Activated naive CD4-positive, alpha-beta T cell treated with anti-CD3 and anti-CD28 coated beads for 36 hours (primary cell): ENCODE measurements at regions of chr9 and their contacts with region 1.

Region 1: DNA sequence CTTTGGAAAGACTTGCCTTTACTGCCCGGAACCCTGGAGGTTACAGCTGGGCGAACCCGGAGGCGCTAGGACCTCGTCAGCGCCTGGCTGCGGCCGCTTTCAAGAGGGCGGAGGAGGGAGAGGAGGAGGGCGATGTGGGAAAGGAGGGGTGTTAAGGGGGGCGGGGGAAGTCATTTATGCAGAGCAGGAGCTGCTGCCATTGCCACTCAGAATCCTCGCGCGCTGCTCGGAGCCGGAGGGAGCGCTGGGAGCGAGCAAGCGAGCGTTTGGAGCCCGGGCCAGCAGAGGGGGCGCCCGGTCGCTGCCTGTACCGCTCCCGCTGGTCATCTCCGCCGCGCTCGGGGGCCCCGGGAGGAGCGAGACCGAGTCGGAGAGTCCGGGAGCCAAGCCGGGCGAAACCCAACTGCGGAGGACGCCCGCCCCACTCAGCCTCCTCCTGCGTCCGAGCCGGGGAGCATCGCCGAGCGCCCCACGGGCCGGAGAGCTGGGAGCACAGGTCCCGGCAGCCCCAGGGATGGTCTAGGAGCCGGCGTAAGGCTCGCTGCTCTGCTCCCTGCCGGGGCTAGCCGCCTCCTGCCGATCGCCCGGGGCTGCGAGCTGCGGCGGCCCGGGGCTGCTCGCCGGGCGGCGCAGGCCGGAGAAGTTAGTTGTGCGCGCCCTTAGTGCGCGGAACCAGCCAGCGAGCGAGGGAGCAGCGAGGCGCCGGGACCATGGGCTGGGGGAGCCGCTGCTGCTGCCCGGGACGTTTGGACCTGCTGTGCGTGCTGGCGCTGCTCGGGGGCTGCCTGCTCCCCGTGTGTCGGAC is at the start of gene PCSK5:
- DNase-seq: peak; percentile 92
- H3K4me3 Mint-ChIP-seq: peak within 1 kb of the TSS; percentile 97
- H3K27ac Mint-ChIP-seq: peak within 1 kb of the TSS; percentile 66
- H3K4me1 Mint-ChIP-seq: peaks cover 33% of the 10 kb centered on the region
- H3K27me3 Mint-ChIP-seq: no peaks in the 10 kb centered on the region
- total RNA-seq, gene PCSK5: 5.7 to 6.0 TPM

Region 2: GRCh38 chr9:75088260-75088905 is 802.3 kb before region 1 on chr9 and contains the start of gene OSTF1:
- CTCF ChIA-PET with region 1: no interaction called
- intact Hi-C with region 1: loop called (anchors 5 kb)
- DNase-seq: peak; percentile 93
- H3K4me3 Mint-ChIP-seq: peak within 1 kb of the TSS; percentile 95
- H3K27ac Mint-ChIP-seq: peak within 1 kb of the TSS; percentile 94
- H3K4me1 Mint-ChIP-seq: peaks cover 61% of the 10 kb centered on the region
- H3K27me3 Mint-ChIP-seq: no peaks in the 10 kb centered on the region
- total RNA-seq, gene OSTF1: 102 to 104 TPM

Region 3: GRCh38 chr9:75880618-75881017 is 10.1 kb before region 1 on chr9:
- CTCF ChIA-PET with region 1: no interaction called
- intact Hi-C with region 1: no loop called
- DNase-seq: no peak
- H3K4me3 Mint-ChIP-seq: no peak overlapping the region
- H3K27ac Mint-ChIP-seq: no peak overlapping the region
- H3K4me1 Mint-ChIP-seq: no peaks in the 10 kb centered on the region
- H3K27me3 Mint-ChIP-seq: no peaks in the 10 kb centered on the region

Region 4: GRCh38 chr9:75910731-75911130 is 20.1 kb after region 1 on chr9:
- CTCF ChIA-PET with region 1: no interaction called
- intact Hi-C with region 1: loop called (anchors 1 kb)
- DNase-seq: no peak
- H3K4me3 Mint-ChIP-seq: no peak overlapping the region
- H3K27ac Mint-ChIP-seq: no peak overlapping the region
- H3K4me1 Mint-ChIP-seq: peaks cover 58% of the 10 kb centered on the region
- H3K27me3 Mint-ChIP-seq: no peaks in the 10 kb centered on the region

Region 5: DNA sequence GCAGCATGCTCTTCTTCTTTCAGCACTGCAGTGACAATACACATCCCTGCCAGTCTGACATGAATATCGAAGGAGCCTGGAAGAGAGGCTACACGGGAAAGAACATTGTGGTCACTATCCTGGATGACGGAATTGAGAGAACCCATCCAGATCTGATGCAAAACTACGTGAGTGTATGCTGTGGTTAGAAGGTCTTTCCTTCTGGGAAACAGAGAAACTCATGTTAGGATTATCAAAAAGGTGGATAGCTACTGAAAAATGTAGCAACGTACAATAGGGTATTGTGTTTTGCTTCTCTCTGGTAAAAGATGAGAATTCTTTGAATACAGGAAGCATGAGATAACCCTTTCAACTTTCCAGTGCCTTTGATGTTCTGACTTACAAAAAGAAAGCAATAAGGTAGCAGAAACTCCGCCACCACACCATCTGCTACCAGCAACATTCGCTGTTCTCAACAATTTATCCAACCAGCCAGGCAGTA is 133.1 kb after region 1 on chr9:
- CTCF ChIA-PET with region 1: interaction called, 3 read pairs
- intact Hi-C with region 1: loop called (anchors 1 kb)
- DNase-seq: peak; percentile 64
- H3K4me3 Mint-ChIP-seq: peak overlapping the region; percentile 68
- H3K27ac Mint-ChIP-seq: peak overlapping the region; percentile 83
- H3K4me1 Mint-ChIP-seq: peaks cover 92% of the 10 kb centered on the region
- H3K27me3 Mint-ChIP-seq: no peaks in the 10 kb centered on the region

Region 6: DNA sequence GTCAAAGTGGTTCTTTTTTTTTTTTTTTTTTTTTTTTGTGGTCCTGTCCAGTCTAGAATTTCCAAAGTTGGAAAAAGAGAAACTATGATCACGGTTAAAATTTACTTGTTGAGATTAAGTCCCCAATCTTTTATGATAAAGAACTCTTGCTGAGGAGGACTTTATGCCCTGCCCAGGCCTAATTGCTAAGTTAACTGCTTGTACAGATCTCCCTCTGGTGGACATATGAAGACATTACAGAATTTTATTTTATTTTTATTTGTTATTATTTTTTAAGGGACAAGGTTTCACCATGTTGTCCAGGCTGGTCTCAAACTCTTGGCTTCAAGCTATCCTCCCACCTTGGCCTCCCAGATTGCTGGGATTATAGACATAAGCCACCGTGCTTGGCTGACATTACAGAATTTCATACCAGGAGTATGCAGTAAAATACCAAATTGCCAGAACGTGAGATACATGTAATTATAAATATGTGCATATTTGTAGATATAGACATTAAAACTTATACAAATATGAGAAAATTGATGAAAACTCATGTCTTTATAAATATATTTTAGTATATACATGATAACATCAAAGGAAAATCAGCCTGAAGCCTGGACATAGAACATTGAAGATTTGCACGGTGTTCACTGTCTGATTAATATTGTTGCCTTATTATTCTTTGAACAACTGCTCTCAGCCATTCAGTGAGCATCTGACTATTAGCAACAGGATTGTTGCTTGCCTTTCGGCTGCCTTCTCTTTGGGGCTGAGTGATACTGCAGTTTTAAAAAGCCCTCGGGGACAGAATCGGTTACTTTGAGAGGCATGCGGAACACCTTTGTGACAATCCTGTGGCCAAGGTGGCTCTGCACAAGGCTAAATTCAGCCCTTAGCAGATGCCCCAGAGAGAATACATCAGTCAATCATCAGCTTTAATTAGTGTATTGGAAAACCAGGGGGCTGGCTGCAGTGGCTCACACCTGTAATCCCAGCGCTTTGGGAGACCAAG is 412.6 kb after region 1 on chr9:
- CTCF ChIA-PET with region 1: interaction called, 3 read pairs
- intact Hi-C with region 1: loop called (anchors 2 kb)
- DNase-seq: peak; percentile 21
- H3K4me3 Mint-ChIP-seq: no peak overlapping the region
- H3K27ac Mint-ChIP-seq: no peak overlapping the region
- H3K4me1 Mint-ChIP-seq: no peaks in the 10 kb centered on the region
- H3K27me3 Mint-ChIP-seq: peaks cover 11% of the 10 kb centered on the region

Region 7: DNA sequence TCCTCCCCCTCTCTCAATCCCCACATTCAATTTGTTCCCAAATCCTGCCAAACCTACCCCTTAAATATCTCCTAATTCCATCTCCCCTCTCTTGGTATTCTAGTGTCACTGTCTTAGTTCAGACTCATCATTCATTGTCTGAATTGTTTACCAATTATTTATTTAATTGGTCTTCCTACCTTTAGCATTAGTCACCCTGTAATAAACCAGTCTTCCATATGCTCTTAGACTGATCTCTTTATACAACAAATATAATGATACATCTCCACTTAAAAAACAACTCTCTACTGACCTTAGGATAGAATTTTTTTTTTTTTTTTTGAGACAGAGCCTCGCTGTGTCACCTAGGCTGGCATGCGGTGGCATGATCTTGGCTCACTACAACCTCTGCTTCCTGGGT is 452.2 kb after region 1 on chr9:
- CTCF ChIA-PET with region 1: no interaction called
- intact Hi-C with region 1: no loop called
- DNase-seq: no peak
- H3K4me3 Mint-ChIP-seq: no peak overlapping the region
- H3K27ac Mint-ChIP-seq: no peak overlapping the region
- H3K4me1 Mint-ChIP-seq: no peaks in the 10 kb centered on the region
- H3K27me3 Mint-ChIP-seq: peaks cover 18% of the 10 kb centered on the region

Region 8: GRCh38 chr9:77177161-77177893 is 1286.7 kb after region 1 on chr9 and contains the start of gene VPS13A:
- CTCF ChIA-PET with region 1: no interaction called
- intact Hi-C with region 1: loop called (anchors 5 kb)
- DNase-seq: peak; percentile 96
- H3K4me3 Mint-ChIP-seq: peak within 1 kb of the TSS; percentile 80
- H3K27ac Mint-ChIP-seq: peak within 1 kb of the TSS; percentile 79
- H3K4me1 Mint-ChIP-seq: peaks cover 23% of the 10 kb centered on the region
- H3K27me3 Mint-ChIP-seq: no peaks in the 10 kb centered on the region
- total RNA-seq, gene VPS13A: 26.8 to 26.9 TPM